GM12878 (cell line): ENCODE measurements at regions of chr2 and their contacts with region 1.

Region 1: DNA sequence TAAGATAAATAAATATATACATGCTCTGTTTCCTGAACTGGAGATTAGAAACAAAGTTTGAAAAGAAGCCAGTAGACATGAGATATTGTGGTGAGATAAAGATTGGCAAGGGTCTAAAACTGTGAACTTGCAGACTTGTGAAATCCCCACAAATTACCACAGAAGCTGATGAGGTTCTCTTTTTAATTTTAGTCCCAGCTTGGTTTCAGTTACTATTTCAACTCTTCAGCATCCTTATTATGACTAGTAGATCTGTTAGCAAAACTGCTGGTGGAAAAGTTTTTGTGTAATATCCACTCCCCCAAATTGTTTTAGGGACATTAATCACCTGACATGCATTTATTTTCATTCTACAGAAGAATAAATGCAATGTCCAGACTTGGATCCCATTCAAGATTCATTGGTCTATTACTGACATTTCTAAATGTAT is 20.8 kb downstream of the RASGRP3 start:
- DNase-seq: peak; percentile 92
- ATAC-seq: peak; percentile 62
- H3K4me3 ChIP-seq: peak overlapping the region; percentile 66
- H3K27ac ChIP-seq: peak overlapping the region; percentile 91
- H3K4me1 ChIP-seq: peaks cover 75% of the 10 kb centered on the region
- H3K27me3 ChIP-seq: no peaks in the 10 kb centered on the region
- CTCF ChIP-seq: no peak
- EP300 ChIP-seq: peak; percentile 84 to 86; a peak in 3 of 4 replicates
- POLR2A ChIP-seq: no peak
- RAD21 ChIP-seq: no peak

Region 2: DNA sequence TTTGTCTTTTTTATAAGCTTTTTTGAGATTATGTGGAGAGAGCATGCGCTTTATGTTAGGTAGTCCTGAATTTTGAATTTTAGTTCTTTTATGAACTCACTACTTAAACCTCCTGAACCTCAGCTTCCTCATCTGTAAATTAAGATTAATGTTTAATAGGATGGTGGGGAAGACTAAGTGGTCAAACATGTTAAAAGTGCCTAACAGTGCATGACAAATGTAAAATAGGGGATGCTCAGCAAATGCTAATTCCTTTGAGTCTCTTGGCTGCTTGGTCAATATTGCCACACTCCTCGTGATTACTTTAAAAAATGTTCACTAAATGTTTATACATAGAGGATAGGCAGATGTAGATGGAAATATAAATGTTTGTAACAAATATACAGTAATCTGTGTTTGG is 1133.6 kb before region 1 on chr2:
- CTCF ChIA-PET with region 1: no interaction called
- POLR2A ChIA-PET with region 1: no interaction called
- RAD21 ChIA-PET with region 1: no interaction called
- SMC1A ChIA-PET with region 1: no interaction called
- in situ Hi-C with region 1: no loop called
- intact Hi-C with region 1: loop called (anchors 10 kb)
- DNase-seq: no peak
- ATAC-seq: peak; percentile 63
- H3K4me3 ChIP-seq: no peak overlapping the region
- H3K27ac ChIP-seq: no peak overlapping the region
- H3K4me1 ChIP-seq: peaks cover 4% of the 10 kb centered on the region
- H3K27me3 ChIP-seq: no peaks in the 10 kb centered on the region
- CTCF ChIP-seq: no peak
- EP300 ChIP-seq: peak in 1 of 2 experiments; percentile 28; a peak in 1 of 4 replicates
- POLR2A ChIP-seq: no peak
- RAD21 ChIP-seq: no peak

Region 3: DNA sequence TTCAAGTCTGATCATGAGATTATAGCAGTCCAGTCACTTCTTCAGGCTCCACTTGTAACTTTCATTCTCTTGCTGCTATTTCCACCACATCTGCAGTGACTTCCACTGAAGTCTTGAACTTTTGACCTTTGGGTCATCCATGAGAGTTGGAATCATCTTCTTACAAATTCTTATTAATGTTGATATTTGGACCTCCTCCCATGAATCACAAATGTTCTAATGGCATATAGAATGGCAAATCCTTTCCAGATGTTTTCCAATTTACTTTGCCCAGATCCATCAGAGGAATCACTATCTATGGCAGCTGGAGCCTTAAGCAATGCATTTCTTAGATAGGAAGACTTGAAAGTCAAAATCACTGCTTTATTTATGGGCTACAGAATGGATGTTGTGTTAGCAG is 391.1 kb before region 1 on chr2:
- CTCF ChIA-PET with region 1: no interaction called
- POLR2A ChIA-PET with region 1: no interaction called
- RAD21 ChIA-PET with region 1: no interaction called
- SMC1A ChIA-PET with region 1: no interaction called
- in situ Hi-C with region 1: no loop called
- intact Hi-C with region 1: no loop called
- DNase-seq: no peak
- ATAC-seq: no peak
- H3K4me3 ChIP-seq: no peak overlapping the region
- H3K27ac ChIP-seq: no peak overlapping the region
- H3K4me1 ChIP-seq: no peaks in the 10 kb centered on the region
- H3K27me3 ChIP-seq: no peaks in the 10 kb centered on the region
- CTCF ChIP-seq: no peak
- EP300 ChIP-seq: no peak
- POLR2A ChIP-seq: no peak
- RAD21 ChIP-seq: no peak

Region 4: GRCh38 chr2:33529771-33530351 is 32.6 kb after region 1 on chr2:
- CTCF ChIA-PET with region 1: interaction called, 4 read pairs
- POLR2A ChIA-PET with region 1: interaction called, 11 read pairs
- RAD21 ChIA-PET with region 1: interaction called, 7 read pairs
- SMC1A ChIA-PET with region 1: interaction called, 7 read pairs
- in situ Hi-C with region 1: no loop called
- intact Hi-C with region 1: loop called (anchors 2 kb)
- DNase-seq: peak; percentile 26
- ATAC-seq: peak; percentile 61
- H3K4me3 ChIP-seq: no peak overlapping the region
- H3K27ac ChIP-seq: peak overlapping the region; percentile 98
- H3K4me1 ChIP-seq: peaks cover 47% of the 10 kb centered on the region
- H3K27me3 ChIP-seq: no peaks in the 10 kb centered on the region
- CTCF ChIP-seq: no peak
- EP300 ChIP-seq: no peak
- POLR2A ChIP-seq: no peak
- RAD21 ChIP-seq: no peak